ENCODE measurements at regions of chr11 and their contacts with region 1.

Region 1: GRCh38 chr11:34926101-34926830 is 9.8 kb downstream of the PDHX start:
- DNase-seq: peak; percentile 67
- H3K4me3 ChIP-seq: no peak overlapping the region
- H3K27ac ChIP-seq: no peak overlapping the region
- H3K4me1 ChIP-seq: peaks cover 5% of the 10 kb centered on the region
- H3K27me3 ChIP-seq: no peaks in the 10 kb centered on the region
- CTCF ChIP-seq: peak; percentile 34 to 46
- POLR2A ChIP-seq: no peak

Region 2: DNA sequence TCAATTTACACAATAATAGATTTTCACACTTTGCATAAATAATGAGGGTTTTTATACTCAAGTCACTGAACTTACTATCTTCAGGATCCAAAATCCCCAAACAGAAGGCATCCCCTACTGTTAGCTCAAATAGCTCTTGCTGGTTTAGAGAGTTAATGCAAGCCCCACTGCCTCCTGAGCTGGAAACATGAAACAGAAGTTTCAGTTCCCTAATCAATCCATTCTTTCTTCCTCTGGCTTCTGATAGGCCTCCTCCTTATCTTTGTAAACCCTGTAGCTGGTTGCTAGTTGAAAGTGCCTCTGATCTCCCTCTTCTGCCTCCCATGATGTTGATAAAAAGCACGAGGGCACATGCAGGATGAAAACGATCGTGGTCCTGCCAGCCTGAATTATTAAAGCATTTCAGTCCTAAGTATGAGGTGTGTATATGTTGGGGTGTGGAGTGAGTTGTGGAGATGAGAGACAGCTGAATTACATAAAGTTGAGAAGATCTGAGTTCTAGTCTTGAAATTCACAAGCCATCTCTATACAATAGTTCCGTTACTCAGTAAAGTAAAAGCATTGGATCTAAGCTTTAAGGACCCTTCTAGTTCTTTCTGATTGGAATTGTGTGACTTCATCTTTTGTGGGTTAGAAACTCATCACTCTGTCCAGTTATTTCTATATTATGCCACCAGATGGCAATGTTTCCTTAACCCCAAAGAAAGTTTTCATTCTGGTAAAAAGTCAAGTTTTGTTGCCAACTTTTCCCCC is 340.4 kb before region 1 on chr11:
- CTCF ChIA-PET with region 1: interaction called, 16 read pairs
- POLR2A ChIA-PET with region 1: no interaction called
- dilution Hi-C with region 1: no loop called
- intact Hi-C with region 1: no loop called
- DNase-seq: peak; percentile 55
- H3K4me3 ChIP-seq: no peak overlapping the region
- H3K27ac ChIP-seq: no peak overlapping the region
- H3K4me1 ChIP-seq: no peaks in the 10 kb centered on the region
- H3K27me3 ChIP-seq: peaks cover 5 to 11% of the 10 kb centered on the region in 2 experiments
- CTCF ChIP-seq: peak; percentile 36 to 38
- POLR2A ChIP-seq: no peak

Region 3: GRCh38 chr11:35082321-35083182 is 156.3 kb after region 1 on chr11:
- CTCF ChIA-PET with region 1: interaction called, 4 read pairs
- POLR2A ChIA-PET with region 1: no interaction called
- dilution Hi-C with region 1: no loop called
- intact Hi-C with region 1: loop called (anchors 10 kb)
- DNase-seq: no peak
- H3K4me3 ChIP-seq: no peak overlapping the region
- H3K27ac ChIP-seq: no peak overlapping the region
- H3K4me1 ChIP-seq: peaks cover 26% of the 10 kb centered on the region
- H3K27me3 ChIP-seq: no peaks in the 10 kb centered on the region
- CTCF ChIP-seq: no peak
- POLR2A ChIP-seq: no peak

Region 4: DNA sequence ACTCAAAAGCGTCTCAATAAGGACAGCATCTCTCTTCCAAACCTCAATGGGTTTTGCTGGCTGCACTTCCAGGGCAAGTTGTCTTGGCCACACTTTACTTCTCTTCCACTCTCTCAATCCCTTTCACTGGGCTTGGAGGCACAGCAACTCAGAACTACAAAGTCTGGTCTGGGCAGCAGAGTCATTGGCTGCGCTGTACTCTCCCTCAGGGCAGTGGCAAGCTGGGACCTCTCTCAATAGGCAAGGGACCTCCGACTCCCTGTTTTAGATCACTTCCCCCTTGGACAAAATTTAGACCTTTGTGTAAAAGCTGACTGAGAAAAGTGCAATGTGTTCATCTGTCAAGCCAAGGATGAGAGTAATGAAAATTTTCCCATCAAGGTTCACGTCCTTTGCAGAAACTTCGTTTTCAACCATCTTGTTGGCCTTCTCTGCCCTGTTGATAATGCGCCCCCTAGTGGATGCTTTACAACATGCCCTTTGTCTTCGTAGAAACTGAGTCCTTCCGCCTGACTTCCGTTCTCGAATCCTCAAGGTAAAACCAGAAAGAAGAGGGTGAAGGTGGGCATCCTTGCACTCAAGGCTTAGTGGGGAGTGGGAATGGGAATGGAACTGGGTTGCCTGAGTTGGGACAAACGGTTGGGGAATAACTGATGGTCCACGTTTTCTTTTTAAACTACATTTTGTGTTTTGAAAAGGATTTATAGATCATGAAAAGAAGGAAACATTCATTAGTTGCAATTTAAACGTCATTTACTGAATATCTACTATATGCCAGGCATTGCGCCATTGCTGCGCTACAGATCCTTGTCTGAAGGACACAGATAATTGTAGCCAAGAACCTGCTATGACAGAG is 311.8 kb after region 1 on chr11:
- CTCF ChIA-PET with region 1: interaction called, 41 read pairs
- POLR2A ChIA-PET with region 1: no interaction called
- dilution Hi-C with region 1: no loop called
- intact Hi-C with region 1: loop called (anchors 1 kb)
- DNase-seq: peak; percentile 70
- H3K4me3 ChIP-seq: no peak overlapping the region
- H3K27ac ChIP-seq: no peak overlapping the region
- H3K4me1 ChIP-seq: no peaks in the 10 kb centered on the region
- H3K27me3 ChIP-seq: peaks cover 5 to 21% of the 10 kb centered on the region in 2 experiments
- CTCF ChIP-seq: peak; percentile 78 to 81
- POLR2A ChIP-seq: no peak

Region 5: GRCh38 chr11:35404388-35404775 is 478.1 kb after region 1 on chr11:
- CTCF ChIA-PET with region 1: interaction called, 10 read pairs
- POLR2A ChIA-PET with region 1: no interaction called
- dilution Hi-C with region 1: no loop called
- intact Hi-C with region 1: no loop called
- DNase-seq: peak; percentile 25
- H3K4me3 ChIP-seq: no peak overlapping the region
- H3K27ac ChIP-seq: no peak overlapping the region
- H3K4me1 ChIP-seq: no peaks in the 10 kb centered on the region
- H3K27me3 ChIP-seq: peaks cover 5 to 19% of the 10 kb centered on the region in 2 experiments
- CTCF ChIP-seq: peak; percentile 51 to 52
- POLR2A ChIP-seq: no peak

Region 6: DNA sequence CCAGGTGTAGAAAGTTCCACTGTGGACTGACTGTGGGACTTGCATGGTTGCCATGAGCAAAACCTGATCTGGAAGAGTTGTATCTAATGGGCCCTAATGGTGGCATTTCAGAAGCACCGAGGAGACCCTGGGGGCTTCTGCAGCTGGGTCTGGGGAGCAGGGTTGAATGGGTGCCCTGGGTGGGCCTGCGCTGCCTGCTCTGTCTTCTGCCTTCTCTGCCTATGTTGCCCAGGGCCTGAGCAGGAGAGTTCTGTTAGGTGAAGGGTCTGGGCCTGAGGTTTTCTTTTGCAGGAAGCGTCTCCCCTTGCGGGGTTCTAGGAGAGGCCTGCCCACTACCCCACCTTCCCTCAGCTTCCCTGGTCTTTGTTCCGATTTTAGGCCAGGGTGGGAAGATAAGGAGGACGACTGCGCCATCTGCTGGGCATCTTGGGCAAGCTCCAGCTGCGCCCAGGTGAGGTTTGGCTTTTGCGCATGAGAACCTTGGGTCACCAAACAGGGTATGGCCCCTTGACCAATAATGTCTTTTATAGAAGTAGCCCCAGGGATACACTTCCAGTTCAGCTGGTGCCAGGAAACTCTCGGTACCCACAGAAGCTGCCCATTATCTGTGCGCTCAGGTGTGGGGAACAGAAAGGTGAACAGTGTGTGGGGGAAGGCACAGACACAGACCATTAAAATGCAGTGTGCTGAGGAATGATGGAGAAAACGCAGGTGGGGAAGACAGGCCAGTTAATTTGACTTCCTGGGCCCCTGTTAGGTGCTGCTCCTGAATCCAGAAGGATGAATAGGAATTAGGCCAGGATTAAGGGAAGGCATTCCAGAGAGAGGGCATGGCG is 1339.7 kb after region 1 on chr11:
- CTCF ChIA-PET with region 1: no interaction called
- POLR2A ChIA-PET with region 1: no interaction called
- dilution Hi-C with region 1: no loop called
- intact Hi-C with region 1: loop called (anchors 10 kb)
- DNase-seq: peak; percentile 40
- H3K4me3 ChIP-seq: no peak overlapping the region
- H3K27ac ChIP-seq: no peak overlapping the region
- H3K4me1 ChIP-seq: no peaks in the 10 kb centered on the region
- H3K27me3 ChIP-seq: peaks cover 0 to 5% of the 10 kb centered on the region in 2 experiments
- CTCF ChIP-seq: peak; percentile 86 to 89
- POLR2A ChIP-seq: no peak